Ascending aorta (tissue), 2 donors: ENCODE measurements at regions of chr5 and their contacts with region 1.

Region 1: GRCh38 chr5:173451031-173451430 is 122.8 kb upstream of the STC2 start:
- DNase-seq: no peak
- H3K4me3 ChIP-seq: no peak overlapping the region
- H3K27ac ChIP-seq: no peak overlapping the region
- H3K4me1 ChIP-seq: peaks cover 2 to 8% of the 10 kb centered on the region in 2 donors
- H3K27me3 ChIP-seq: no peaks in the 10 kb centered on the region
- CTCF ChIP-seq: peak in 2 of 3 experiments; percentile 22 to 44

Region 2: GRCh38 chr5:173573126-173573960 is 122.3 kb after region 1 on chr5:
- intact Hi-C with region 1: loop called (anchors 10 kb)
- DNase-seq: peak in 1 of 2 donors; percentile 80
- H3K4me3 ChIP-seq: peak overlapping the region; percentile 9 to 32
- H3K27ac ChIP-seq: no peak overlapping the region
- H3K4me1 ChIP-seq: peaks cover 0 to 3% of the 10 kb centered on the region in 2 donors
- H3K27me3 ChIP-seq: no peaks in the 10 kb centered on the region
- CTCF ChIP-seq: peak; percentile 86 to 98 (median 96)